CD8-positive, alpha-beta T cell (primary cell): ENCODE measurements at regions of chr2 and their contacts with region 1.

Region 1: DNA sequence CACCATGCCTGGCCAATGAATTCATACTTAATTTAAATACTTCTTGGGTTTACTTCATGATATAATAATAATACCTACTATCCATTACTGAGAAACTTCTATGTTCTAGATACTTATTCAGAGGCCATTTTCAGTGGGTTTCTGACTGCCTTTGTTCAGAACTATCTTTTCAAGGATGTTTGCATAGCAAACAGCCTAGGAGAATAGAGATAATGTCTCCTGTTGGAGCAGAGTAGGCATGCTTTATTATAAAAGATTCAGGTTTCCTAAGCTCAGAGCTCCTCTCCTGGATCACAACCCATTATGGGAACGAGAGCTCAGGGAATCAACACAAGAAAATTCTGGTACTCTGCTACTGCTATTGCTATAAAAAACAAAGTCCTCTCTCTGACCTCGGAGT is 11.1 kb downstream of the FASTKD1 start:
- DNase-seq: no peak
- ATAC-seq: no peak
- H3K4me3 ChIP-seq: no peak overlapping the region
- H3K4me3 Mint-ChIP-seq: no peak overlapping the region
- H3K27ac ChIP-seq: no peak overlapping the region
- H3K27ac Mint-ChIP-seq: no peak overlapping the region
- H3K4me1 ChIP-seq: no peaks in the 10 kb centered on the region
- H3K4me1 Mint-ChIP-seq: no peaks in the 10 kb centered on the region
- H3K27me3 ChIP-seq: no peaks in the 10 kb centered on the region
- H3K27me3 Mint-ChIP-seq: no peaks in the 10 kb centered on the region
- CTCF ChIP-seq: no peak

Region 2: GRCh38 chr2:169315357-169315756 is 247.2 kb before region 1 on chr2:
- CTCF ChIA-PET with region 1: no interaction called
- POLR2A ChIA-PET with region 1: no interaction called
- intact Hi-C with region 1: no loop called
- DNase-seq: no peak
- ATAC-seq: no peak
- H3K4me3 ChIP-seq: no peak overlapping the region
- H3K4me3 Mint-ChIP-seq: no peak overlapping the region
- H3K27ac ChIP-seq: no peak overlapping the region
- H3K27ac Mint-ChIP-seq: no peak overlapping the region
- H3K4me1 ChIP-seq: no peaks in the 10 kb centered on the region
- H3K4me1 Mint-ChIP-seq: no peaks in the 10 kb centered on the region
- H3K27me3 ChIP-seq: no peaks in the 10 kb centered on the region
- H3K27me3 Mint-ChIP-seq: peaks cover 25% of the 10 kb centered on the region
- CTCF ChIP-seq: no peak

Region 3: GRCh38 chr2:169479257-169480078 is 83.1 kb before region 1 on chr2 and contains the start of gene BBS5:
- CTCF ChIA-PET with region 1: no interaction called
- POLR2A ChIA-PET with region 1: no interaction called
- intact Hi-C with region 1: loop called in 1 of 2 experiments (anchors 5 kb)
- DNase-seq: peak; percentile 42 to 82 (median 67)
- ATAC-seq: peak; percentile 96
- H3K4me3 ChIP-seq: peak within 1 kb of the TSS; percentile 76 to 77
- H3K4me3 Mint-ChIP-seq: peak within 1 kb of the TSS; percentile 95
- H3K27ac ChIP-seq: peak within 1 kb of the TSS in 1 of 2 experiments; percentile 44
- H3K27ac Mint-ChIP-seq: peak within 1 kb of the TSS; percentile 81
- H3K4me1 ChIP-seq: peaks cover 12% of the 10 kb centered on the region
- H3K4me1 Mint-ChIP-seq: peaks cover 20% of the 10 kb centered on the region
- H3K27me3 ChIP-seq: no peaks in the 10 kb centered on the region
- H3K27me3 Mint-ChIP-seq: no peaks in the 10 kb centered on the region
- CTCF ChIP-seq: peak; percentile 34
- total RNA-seq, gene BBS5: 2.1 to 2.7 TPM